Dorsolateral prefrontal cortex (tissue), 120 donors: ENCODE measurements at regions of chr19 and their contacts with region 1.

Region 1: DNA sequence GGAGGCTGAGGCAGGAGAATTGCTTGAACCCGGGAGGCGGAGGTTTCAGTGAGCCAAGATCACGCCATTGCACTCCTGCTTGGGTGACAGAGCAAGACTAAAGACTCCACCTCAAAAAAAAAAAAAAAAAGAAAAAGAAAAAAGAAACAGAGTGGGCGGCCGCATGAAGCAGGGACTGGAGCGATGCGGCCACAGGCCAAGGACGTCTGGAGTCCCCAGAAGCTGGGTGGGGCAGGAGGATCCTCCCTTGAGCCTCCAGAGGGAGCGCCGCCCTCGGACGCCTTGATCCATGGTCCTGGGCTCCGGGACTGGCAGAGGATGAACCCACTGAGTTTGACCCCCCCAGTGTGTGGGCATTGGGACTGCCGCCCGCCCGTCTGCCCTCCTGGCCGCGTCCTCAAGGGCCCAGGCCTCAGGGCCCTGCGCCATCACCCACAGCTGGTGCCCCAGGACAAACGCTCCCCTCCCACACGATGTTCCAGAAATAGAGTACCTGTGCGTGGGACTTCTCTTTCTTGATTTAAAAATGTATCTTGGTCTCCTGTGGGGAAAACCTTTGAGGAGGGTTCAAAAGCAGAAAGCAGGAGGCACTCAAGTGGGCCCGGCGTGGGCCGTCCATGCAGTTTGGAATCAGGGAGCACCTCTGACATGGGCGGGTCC is 15.5 kb downstream of the BTBD2 start:
- DNase-seq: peak in 1 of 10 donors; percentile 32
- H3K4me3 ChIP-seq: no peak overlapping the region
- H3K27ac ChIP-seq: peak overlapping the region in 8 of 59 donors; percentile 9 to 46 (median 34)
- H3K27me3 ChIP-seq: no peaks in the 10 kb centered on the region
- CTCF ChIP-seq: no peak

Region 2: DNA sequence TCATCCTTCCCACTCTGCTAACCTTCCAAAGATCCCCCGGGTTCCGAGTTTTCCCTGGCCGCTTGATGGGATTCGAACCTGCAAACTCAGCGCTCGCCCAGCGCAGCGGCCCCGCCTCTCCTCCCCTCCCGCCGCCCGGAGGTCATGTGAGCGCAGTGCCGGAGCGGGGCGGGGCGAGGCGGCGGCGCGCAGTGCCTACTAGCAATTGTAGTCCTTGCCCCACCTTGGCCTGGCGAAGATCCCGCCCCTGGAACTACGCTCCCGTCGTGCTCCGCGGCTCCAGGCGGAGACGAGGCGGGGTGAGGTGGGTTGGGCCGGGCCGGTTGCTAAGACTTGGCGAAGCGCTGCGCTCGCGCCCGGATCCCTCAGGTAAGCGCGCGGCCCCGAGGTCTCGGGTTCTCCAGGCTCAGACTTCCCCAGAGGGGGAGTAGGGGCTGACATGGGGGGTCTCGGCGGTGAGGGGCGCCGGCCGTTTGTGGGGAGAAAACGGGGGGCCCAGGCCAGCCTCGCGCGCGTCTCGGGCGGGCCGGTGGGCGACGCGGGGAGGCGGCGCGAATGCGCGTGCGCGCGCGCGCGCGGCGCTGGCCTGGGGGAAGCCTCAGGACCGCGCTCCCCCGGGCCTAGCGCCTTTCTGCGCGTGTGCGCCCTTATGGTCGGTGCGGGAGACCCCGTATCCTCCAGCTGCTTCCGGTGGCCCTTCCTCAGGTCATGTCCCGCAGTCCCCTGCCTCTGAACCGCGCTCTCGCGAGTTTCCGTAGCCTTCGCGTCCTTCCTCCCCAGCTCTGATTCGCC is 94.7 kb before region 1 on chr19 and contains the starts of genes ADAT3 and SCAMP4:
- intact Hi-C with region 1: no loop called
- DNase-seq: peak; percentile 97 to 100 (median 98)
- H3K4me3 ChIP-seq: peak within 1 kb of the TSS; percentile 47 to 86 (median 68)
- H3K27ac ChIP-seq: peak within 1 kb of the TSS in 58 of 59 donors; percentile 29 to 98 (median 89)
- H3K27me3 ChIP-seq: no peaks in the 10 kb centered on the region
- CTCF ChIP-seq: peak in 25 of 56 donors; percentile 5 to 51 (median 19)
- total RNA-seq, gene ADAT3: 2.5 to 11.7 (median 5.9) TPM
- total RNA-seq, gene SCAMP4: 39.8 to 90.1 (median 58.7) TPM

Region 3: DNA sequence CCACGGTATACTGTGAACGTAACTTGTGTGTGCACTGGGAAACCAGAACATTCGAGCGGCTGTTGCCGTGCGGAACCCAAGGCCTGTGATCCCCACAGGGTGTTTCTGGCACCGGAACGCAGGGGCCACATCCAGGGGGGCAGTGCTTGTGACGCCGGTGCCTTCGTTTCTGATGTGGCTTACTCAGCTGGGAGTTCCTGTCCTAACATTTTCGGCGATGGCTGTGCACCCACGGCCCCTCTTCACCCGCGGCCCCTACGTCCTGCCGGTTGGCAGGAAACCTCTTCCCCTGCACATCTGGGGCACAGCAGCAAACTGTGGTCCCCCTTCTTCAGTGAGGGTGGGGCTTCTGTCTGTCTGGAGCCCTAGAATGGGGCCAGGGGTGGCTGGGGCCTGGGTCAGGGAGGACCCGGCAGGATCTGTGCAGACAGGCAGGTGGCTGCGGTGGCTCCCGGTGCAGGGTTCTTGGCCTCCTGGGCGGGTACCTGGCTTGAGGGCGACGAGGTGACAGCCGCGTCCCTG is 32.8 kb before region 1 on chr19:
- intact Hi-C with region 1: loop called in 1 of 2 experiments (anchors 5 kb)
- DNase-seq: no peak
- H3K4me3 ChIP-seq: no peak overlapping the region
- H3K27ac ChIP-seq: no peak overlapping the region
- H3K27me3 ChIP-seq: no peaks in the 10 kb centered on the region
- CTCF ChIP-seq: no peak